Left ventricle myocardium inferior (tissue), 1 donor: ENCODE measurements at regions of chr4 and their contacts with region 1.

Region 1: GRCh38 chr4:11748164-11748872 is 319.6 kb upstream of the HS3ST1 start:
- DNase-seq: no peak
- H3K4me3 ChIP-seq: no peak overlapping the region
- H3K27ac ChIP-seq: no peak overlapping the region
- H3K4me1 ChIP-seq: no peaks in the 10 kb centered on the region
- H3K27me3 ChIP-seq: no peaks in the 10 kb centered on the region
- CTCF ChIP-seq: no peak

Region 2: DNA sequence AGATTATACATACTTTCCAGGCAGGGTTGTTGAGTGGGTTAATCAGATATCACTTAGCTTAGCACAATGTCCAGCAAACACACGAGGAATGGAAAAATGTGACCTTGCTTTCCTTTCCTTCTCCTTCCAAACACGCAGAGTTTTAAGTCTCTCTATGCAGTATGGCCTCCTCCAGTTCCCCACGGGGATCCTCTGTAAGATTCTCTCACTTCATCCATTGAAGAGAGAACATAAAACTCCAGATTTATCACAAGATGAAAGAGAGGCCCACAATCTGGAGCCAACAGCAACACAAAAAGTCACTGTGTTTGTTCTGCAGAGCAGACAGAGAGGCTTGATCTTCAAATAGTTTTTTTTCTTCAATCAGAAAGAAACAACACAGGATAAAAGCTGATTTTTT is 727.0 kb before region 1 on chr4:
- intact Hi-C with region 1: loop called (anchors 10 kb)
- DNase-seq: no peak
- H3K4me3 ChIP-seq: no peak overlapping the region
- H3K27ac ChIP-seq: no peak overlapping the region
- H3K4me1 ChIP-seq: no peaks in the 10 kb centered on the region
- H3K27me3 ChIP-seq: peaks cover 11% of the 10 kb centered on the region
- CTCF ChIP-seq: no peak

Region 3: DNA sequence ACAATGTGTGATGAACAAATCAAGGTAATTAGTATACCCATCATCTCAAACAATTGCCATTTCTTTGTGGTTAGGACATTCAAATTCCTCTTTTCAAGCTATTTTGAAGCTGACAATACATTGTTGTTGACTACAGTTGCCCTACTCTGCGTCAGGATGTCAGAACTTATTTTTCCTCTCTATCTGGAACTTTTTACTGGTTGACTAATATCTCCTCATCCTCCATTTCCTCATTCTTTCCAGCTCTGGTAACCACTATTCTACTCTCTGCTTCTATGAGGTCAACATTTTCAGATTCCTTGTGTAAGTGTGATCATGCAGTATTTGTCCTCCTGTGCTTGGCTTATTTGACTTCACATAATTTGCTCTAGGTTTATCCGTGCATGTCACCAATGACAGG is 79.2 kb before region 1 on chr4:
- intact Hi-C with region 1: no loop called
- DNase-seq: no peak
- H3K4me3 ChIP-seq: no peak overlapping the region
- H3K27ac ChIP-seq: no peak overlapping the region
- H3K4me1 ChIP-seq: no peaks in the 10 kb centered on the region
- H3K27me3 ChIP-seq: no peaks in the 10 kb centered on the region
- CTCF ChIP-seq: no peak

Region 4: DNA sequence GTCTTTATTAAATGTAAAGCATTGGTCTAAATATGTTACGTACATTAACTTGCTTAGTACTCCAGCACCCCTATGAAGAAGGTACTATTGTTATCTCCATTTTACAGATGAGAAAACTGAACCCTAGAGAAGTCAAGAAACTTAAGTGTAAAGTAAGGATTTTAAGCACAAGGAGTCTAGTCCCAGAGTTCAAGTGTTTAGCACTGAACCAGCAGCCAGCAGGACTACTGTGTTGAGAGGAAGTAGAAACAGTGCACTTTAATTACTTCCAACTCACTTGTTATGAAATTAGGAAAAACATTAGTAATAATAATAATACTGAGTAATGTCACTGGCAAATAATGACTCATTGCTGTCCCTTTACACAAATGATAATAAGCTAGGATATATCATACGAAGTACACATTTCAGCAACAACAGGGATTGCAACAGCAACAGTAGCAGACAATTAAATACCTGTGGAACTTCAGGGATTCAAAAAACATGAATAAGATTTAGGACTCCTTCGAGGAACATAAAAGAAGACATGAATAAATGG is 228.5 kb after region 1 on chr4:
- intact Hi-C with region 1: no loop called
- DNase-seq: no peak
- H3K4me3 ChIP-seq: no peak overlapping the region
- H3K27ac ChIP-seq: no peak overlapping the region
- H3K4me1 ChIP-seq: no peaks in the 10 kb centered on the region
- H3K27me3 ChIP-seq: no peaks in the 10 kb centered on the region
- CTCF ChIP-seq: no peak